HEK293 (cell line): ENCODE measurements at regions of chr6 and their contacts with region 1.

Region 1: DNA sequence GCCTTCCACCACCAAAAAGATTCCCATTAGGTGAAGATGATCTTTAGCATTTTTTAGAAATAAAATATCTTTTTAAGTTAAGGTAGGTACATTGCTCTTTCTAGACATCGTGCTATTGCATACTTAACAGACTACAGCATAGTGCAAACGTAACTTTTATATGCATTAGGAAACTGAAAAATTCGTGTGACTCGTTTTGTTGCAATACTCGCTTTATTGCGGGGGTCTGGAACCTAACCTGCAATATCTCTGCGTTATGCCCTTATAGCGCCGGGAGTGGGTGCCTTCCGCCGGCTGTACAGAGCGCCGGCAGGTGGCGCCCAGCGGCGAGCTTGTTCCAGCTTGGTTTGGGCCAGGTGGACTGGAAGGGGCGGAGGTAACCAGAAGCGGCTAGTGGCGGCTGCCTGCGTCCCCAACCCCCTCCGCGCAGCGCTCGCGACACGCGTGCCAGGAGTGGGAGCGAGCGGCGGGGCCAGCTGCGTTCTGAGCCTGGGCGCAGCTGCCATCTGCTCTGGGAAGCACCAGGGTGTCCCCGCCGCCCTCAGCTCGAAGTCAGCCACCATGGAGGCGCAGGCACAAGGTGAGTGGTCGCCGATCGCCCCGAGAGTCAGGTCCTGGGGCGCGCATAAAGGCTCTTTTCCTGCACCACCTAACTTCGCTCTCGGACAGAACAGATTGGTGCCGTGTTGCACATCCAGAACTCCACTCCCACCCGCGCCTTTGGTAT is at the start of gene TPD52L1:
- H3K4me3 ChIP-seq: peak within 1 kb of the TSS; percentile 73
- H3K27ac ChIP-seq: peak within 1 kb of the TSS; percentile 58; the same call in 1 of the 2 replicates
- H3K4me1 ChIP-seq: no peaks in the 10 kb centered on the region; the same call in 1 of the 2 replicates
- CTCF ChIP-seq: peak; percentile 97

Region 2: DNA sequence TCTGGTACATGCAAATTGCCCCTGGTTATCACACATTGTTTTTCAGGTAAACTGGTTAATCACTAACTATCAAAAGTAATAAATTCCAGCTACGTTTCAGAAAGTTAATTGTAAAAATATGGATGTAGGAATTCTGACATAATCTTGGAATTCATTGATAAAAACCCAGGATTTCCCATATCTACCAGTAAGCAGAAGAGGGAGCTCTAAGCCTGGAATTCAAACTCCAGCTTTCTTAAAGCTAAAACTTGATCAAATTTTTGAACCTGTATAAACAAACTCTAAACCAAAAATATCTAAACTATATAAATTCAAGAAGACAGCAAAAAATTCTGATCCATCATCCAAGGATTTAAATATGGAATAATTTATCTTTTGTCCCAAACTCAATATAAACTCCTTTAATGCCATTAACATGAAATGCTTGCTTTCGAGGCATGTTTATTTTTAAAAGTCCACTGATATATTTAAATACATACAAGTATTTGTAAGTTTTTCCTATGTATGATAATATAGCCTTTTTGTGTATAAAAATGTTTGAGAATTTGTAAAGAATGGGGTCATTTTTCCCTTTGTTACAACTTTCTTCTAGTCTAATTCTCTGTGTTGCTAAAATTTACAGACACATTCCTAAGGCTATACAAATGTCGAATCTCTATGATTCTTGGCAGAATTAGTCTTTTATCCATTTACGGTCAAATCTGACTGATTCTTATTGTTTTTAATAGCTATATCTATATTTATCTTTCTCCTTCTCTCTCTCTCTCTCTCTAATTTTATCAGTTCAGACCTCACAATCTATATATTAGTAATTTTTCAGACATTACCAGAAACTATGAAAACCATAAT is 282.7 kb before region 1 on chr6:
- CTCF ChIA-PET with region 1: interaction called, 13 read pairs
- POLR2A ChIA-PET with region 1: no interaction called
- H3K4me3 ChIP-seq: no peak overlapping the region
- H3K27ac ChIP-seq: no peak overlapping the region
- H3K4me1 ChIP-seq: no peaks in the 10 kb centered on the region
- CTCF ChIP-seq: no peak

Region 3: GRCh38 chr6:125050663-125051318 is 102.8 kb before region 1 on chr6:
- CTCF ChIA-PET with region 1: no interaction called
- POLR2A ChIA-PET with region 1: no interaction called
- H3K4me3 ChIP-seq: no peak overlapping the region
- H3K27ac ChIP-seq: peak overlapping the region; percentile 71
- H3K4me1 ChIP-seq: peaks cover 53% of the 10 kb centered on the region
- CTCF ChIP-seq: no peak

Region 4: GRCh38 chr6:125257351-125257750 is 103.8 kb after region 1 on chr6:
- CTCF ChIA-PET with region 1: no interaction called
- POLR2A ChIA-PET with region 1: no interaction called
- H3K4me3 ChIP-seq: no peak overlapping the region
- H3K27ac ChIP-seq: no peak overlapping the region
- H3K4me1 ChIP-seq: 0 out of 2 replicates have a peak, but pooled peaks cover 3% of the 10 kb centered on the region
- CTCF ChIP-seq: no peak

Region 5: GRCh38 chr6:125301435-125302391 is 148.2 kb after region 1 on chr6 and contains the start of gene HDDC2:
- CTCF ChIA-PET with region 1: interaction called, 14 read pairs
- POLR2A ChIA-PET with region 1: interaction called, 13 read pairs
- H3K4me3 ChIP-seq: peak within 1 kb of the TSS; percentile 89
- H3K27ac ChIP-seq: peak within 1 kb of the TSS; percentile 90
- H3K4me1 ChIP-seq: no peaks in the 10 kb centered on the region
- CTCF ChIP-seq: no peak; the same call in 1 of the 2 replicates

Region 6: DNA sequence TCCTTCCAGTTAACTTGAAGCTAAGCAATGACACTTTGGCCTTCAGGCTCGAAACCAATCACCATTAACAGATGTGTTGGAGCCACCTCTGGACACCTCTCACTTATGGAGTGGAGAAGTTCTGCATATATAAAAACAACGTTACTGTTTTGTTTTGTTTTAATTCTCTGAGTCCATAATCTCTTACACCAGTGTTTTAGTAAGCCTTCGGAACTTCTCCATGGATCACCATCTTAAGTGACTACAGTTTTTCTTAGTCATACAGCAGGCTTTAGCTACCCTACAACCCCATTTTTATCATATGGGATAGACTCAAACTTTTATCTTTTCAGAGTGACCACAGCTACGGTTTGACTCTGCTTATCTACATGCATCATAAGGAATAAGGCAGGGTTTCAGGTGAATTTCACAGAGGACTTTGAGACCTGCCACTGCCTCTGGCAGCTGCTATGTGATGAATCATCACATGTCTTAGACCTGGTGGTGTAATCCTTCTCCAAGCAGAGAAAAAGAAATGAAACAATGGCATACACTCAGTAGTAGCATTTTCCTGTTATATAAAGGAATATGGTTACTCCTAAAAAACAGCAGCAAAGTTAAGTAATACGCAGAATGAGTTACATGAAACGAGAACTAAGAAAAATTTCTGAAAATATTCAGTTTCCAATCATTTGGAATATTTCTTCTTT is 153.7 kb after region 1 on chr6:
- CTCF ChIA-PET with region 1: interaction called, 14 read pairs
- POLR2A ChIA-PET with region 1: no interaction called
- H3K4me3 ChIP-seq: no peak overlapping the region
- H3K27ac ChIP-seq: no peak overlapping the region
- H3K4me1 ChIP-seq: no peaks in the 10 kb centered on the region
- CTCF ChIP-seq: no peak

Region 7: DNA sequence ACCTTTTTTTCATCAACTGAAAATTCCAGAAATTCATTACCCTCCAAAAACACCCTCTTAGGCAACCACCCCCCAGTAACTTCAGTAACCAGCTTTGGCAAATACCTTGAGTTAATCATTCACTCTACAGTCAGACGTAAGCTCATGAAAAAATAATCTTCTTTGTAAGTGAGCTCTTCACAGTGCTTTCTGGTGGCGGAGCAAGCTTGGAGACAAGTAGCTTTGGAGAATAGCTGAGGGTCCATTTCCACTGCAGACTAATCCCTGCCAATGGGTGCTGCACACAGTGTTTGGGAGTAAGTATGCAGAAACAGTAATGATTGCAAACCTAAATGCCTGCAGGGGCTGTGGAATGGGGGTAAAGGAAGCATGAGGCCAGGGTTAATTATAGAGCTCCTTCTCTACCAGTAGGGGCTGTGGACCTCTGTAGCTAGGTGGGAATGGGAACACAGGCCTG is 746.2 kb after region 1 on chr6:
- CTCF ChIA-PET with region 1: no interaction called
- POLR2A ChIA-PET with region 1: no interaction called
- H3K4me3 ChIP-seq: no peak overlapping the region
- H3K27ac ChIP-seq: no peak overlapping the region
- H3K4me1 ChIP-seq: no peaks in the 10 kb centered on the region
- CTCF ChIP-seq: no peak